ENCODE measurements at regions of chr11 and their contacts with region 1.

Region 1: GRCh38 chr11:93784152-93784934 is at the start of gene MED17:
- DNase-seq: peak; percentile 91 to 96 (median 94)
- H3K4me3 ChIP-seq: peak within 1 kb of the TSS; percentile 83 to 91 (median 86)
- H3K27ac ChIP-seq: peak within 1 kb of the TSS; percentile 89 to 98 (median 94)
- H3K4me1 ChIP-seq: peaks cover 20 to 35% of the 10 kb centered on the region in 2 donors
- H3K27me3 ChIP-seq: no peaks in the 10 kb centered on the region
- CTCF ChIP-seq: peak; percentile 29 to 55 (median 48)
- POLR2A ChIP-seq: peak; percentile 57 to 88
- total RNA-seq, gene MED17: 16.9 to 32.0 (median 23.7) TPM

Region 2: GRCh38 chr11:93604008-93604660 is 180.2 kb before region 1 on chr11:
- intact Hi-C with region 1: no loop called
- DNase-seq: no peak
- H3K4me3 ChIP-seq: no peak overlapping the region
- H3K27ac ChIP-seq: no peak overlapping the region
- H3K4me1 ChIP-seq: no peaks in the 10 kb centered on the region
- H3K27me3 ChIP-seq: no peaks in the 10 kb centered on the region
- CTCF ChIP-seq: no peak
- POLR2A ChIP-seq: no peak

Region 3: DNA sequence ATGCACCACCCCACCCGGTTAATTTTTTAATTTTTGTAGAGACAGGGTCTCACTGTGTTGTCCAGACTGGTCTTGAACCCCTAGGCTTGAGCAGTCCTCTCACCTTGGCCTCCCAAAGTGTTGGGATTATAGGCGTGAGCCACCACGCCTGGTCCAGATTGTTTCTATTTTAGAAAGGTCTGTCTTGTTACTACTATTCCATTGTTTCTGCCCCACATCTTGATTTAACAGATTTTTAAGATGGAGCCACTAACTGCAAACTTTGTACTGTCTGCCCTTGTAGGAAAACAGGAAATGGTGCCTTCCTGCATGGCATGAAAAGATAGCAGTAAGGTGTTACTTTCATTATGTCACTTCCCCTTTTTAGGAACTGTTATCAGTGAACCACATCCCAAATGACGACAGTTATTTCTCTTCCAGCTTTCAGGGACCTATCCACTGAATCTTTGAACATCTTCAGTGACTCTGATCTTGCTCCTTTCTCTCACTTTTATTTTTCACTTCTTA is 66.2 kb before region 1 on chr11:
- intact Hi-C with region 1: no loop called
- DNase-seq: no peak
- H3K4me3 ChIP-seq: no peak overlapping the region
- H3K27ac ChIP-seq: peak overlapping the region in 1 of 5 donors; percentile 33
- H3K4me1 ChIP-seq: no peaks in the 10 kb centered on the region
- H3K27me3 ChIP-seq: no peaks in the 10 kb centered on the region
- CTCF ChIP-seq: no peak
- POLR2A ChIP-seq: no peak

Region 4: GRCh38 chr11:93741094-93741881 is 43.1 kb before region 1 on chr11 and contains the starts of genes C11orf54 and TAF1D:
- intact Hi-C with region 1: loop called in 1 of 2 experiments (anchors 5 kb)
- DNase-seq: peak; percentile 98 to 99 (median 98)
- H3K4me3 ChIP-seq: peak within 1 kb of the TSS; percentile 19 to 69 (median 60)
- H3K27ac ChIP-seq: peak within 1 kb of the TSS; percentile 87 to 96 (median 92)
- H3K4me1 ChIP-seq: peaks cover 9 to 52% of the 10 kb centered on the region in 2 donors
- H3K27me3 ChIP-seq: no peaks in the 10 kb centered on the region
- CTCF ChIP-seq: peak in 3 of 6 experiments; percentile 18 to 39 (median 29)
- POLR2A ChIP-seq: peak; percentile 87
- total RNA-seq, gene C11orf54: 28.7 to 68.2 (median 38.6) TPM
- total RNA-seq, gene TAF1D: 20.8 to 109 (median 55.0) TPM